ENCODE measurements at regions of chr11 and their contacts with region 1.

Region 1: GRCh38 chr11:127939000-127939399 is 648.4 kb downstream of the ETS1 start:
- DNase-seq: peak; percentile 75
- H3K4me3 ChIP-seq: no peak overlapping the region
- H3K27ac ChIP-seq: peak overlapping the region; percentile 76
- H3K4me1 ChIP-seq: peaks cover 27% of the 10 kb centered on the region
- H3K27me3 ChIP-seq: no peaks in the 10 kb centered on the region
- CTCF ChIP-seq: no peak

Region 2: DNA sequence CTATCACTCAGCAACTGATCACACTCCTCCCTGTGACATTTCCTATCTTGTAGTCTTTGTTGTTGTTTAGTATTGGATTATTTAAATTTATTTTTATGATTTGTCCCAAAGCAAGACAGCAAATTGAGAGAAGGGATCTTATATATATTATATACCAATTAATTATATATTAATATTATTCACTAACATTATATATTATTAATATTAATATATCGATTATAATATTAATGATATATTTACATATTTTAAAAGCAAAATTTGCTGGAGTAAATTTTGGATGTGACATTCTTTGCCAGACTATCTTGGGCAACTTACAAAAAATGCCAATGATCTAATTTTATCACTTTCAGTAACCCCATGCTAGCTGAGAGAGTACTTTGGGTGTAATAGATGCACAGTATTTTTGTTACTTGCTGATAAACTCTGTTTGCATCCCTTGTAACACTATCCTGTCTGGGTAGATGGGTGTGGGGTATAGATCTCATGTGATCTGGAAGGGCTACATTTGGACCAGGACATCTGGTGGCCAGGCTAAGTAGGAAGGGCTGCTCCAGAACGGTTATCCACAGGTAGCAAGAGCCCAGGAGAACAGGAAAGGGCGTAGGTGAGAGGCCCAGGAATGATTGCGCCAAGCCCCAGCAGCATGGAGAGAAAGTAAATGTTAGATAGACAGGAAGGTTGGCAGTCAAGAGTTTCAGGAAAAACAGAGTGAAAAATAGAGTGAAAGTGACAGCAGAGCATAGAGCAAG is 329.8 kb before region 1 on chr11:
- CTCF ChIA-PET with region 1: no interaction called
- dilution Hi-C with region 1: no loop called
- in situ Hi-C with region 1: no loop called
- intact Hi-C with region 1: no loop called
- DNase-seq: no peak
- H3K4me3 ChIP-seq: no peak overlapping the region
- H3K27ac ChIP-seq: no peak overlapping the region
- H3K4me1 ChIP-seq: no peaks in the 10 kb centered on the region
- H3K27me3 ChIP-seq: no peaks in the 10 kb centered on the region
- CTCF ChIP-seq: no peak

Region 3: GRCh38 chr11:127859941-127860354 is 79.1 kb before region 1 on chr11:
- CTCF ChIA-PET with region 1: no interaction called
- dilution Hi-C with region 1: no loop called
- in situ Hi-C with region 1: no loop called
- intact Hi-C with region 1: loop called (anchors 1 kb)
- DNase-seq: peak; percentile 46
- H3K4me3 ChIP-seq: no peak overlapping the region
- H3K27ac ChIP-seq: peak overlapping the region; percentile 47
- H3K4me1 ChIP-seq: peaks cover 24% of the 10 kb centered on the region
- H3K27me3 ChIP-seq: no peaks in the 10 kb centered on the region
- CTCF ChIP-seq: no peak

Region 4: DNA sequence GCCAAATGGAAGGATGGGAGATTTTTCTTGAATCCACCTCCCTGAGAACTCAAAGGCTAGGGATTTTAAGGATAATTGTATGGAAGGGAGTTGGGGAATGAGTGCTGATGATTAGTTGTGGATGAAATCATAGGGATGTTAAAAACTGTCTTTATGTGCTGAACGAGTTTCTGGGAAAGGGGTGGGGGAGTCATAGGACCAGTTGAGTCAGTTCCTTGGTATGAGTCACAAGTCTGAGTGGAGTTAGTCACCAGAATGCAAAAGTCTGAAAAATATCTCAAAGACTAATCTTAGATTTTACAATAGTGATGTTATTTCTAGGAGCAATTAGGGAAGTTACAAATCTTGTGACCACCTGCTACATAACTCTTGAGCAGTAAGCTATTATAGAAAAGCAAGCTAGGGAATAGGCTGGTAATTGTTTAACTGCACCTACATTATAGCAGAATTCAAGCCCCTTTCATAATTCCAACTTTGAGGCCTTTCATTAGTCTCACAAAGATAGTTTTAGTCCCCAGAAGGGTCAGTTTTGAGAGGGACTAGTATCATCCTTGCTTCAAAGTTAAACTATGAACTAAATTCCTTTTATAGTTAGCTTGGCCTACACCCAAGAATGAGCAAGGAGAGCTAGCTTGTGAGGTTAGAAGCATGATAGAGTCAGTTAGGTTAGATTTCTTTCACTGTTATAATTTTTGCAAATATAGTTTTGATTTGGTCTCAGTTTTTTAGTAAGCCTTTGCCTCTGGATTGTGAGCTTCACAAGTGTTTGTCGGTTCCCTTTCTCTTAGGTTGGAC is 19.6 kb before region 1 on chr11:
- CTCF ChIA-PET with region 1: no interaction called
- dilution Hi-C with region 1: no loop called
- in situ Hi-C with region 1: no loop called
- intact Hi-C with region 1: loop called (anchors 2 kb)
- DNase-seq: peak; percentile 95
- H3K4me3 ChIP-seq: no peak overlapping the region
- H3K27ac ChIP-seq: peak overlapping the region; percentile 89
- H3K4me1 ChIP-seq: peaks cover 14% of the 10 kb centered on the region
- H3K27me3 ChIP-seq: no peaks in the 10 kb centered on the region
- CTCF ChIP-seq: no peak

Region 5: DNA sequence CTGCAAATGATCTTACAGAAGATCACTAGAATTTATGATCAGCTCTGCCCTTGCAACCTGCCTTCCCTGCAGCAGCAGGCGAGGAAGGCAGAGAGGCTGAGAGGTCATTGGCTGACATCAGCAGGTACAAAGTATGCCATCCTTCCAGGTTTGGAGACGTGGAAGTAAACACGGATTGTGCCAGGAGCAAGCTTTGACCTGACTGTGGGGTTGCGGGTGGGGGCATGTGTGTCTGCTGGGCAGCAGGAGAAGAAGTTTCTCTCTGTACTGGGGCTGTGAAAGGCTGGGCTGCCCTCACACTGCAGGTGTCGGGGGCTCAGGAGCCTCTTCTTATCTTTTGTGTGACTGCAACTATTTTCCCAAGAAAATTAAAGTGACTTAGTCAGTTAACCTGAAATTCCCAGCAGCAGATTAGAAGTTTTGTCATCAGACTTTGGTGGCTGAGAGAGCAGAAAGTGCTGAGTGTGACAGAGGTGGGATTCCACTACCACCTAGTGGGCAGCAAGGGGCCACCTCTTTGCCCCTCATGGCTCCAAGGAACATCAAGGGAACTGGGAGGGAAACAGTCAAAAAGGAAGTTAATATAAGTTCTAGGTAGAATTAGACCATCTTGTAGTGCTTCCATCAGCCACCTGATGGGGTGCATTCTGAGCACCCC is 82.5 kb after region 1 on chr11:
- CTCF ChIA-PET with region 1: no interaction called
- dilution Hi-C with region 1: no loop called
- in situ Hi-C with region 1: loop called in 1 of 2 experiments (anchors 10 kb)
- intact Hi-C with region 1: loop called (anchors 1 kb)
- DNase-seq: no peak
- H3K4me3 ChIP-seq: no peak overlapping the region
- H3K27ac ChIP-seq: no peak overlapping the region
- H3K4me1 ChIP-seq: peaks cover 27% of the 10 kb centered on the region
- H3K27me3 ChIP-seq: no peaks in the 10 kb centered on the region
- CTCF ChIP-seq: peak; percentile 23 to 50

Region 6: GRCh38 chr11:128086794-128087193 is 147.8 kb after region 1 on chr11:
- CTCF ChIA-PET with region 1: no interaction called
- dilution Hi-C with region 1: no loop called
- in situ Hi-C with region 1: no loop called
- intact Hi-C with region 1: no loop called
- DNase-seq: no peak
- H3K4me3 ChIP-seq: no peak overlapping the region
- H3K27ac ChIP-seq: no peak overlapping the region
- H3K4me1 ChIP-seq: no peaks in the 10 kb centered on the region
- H3K27me3 ChIP-seq: no peaks in the 10 kb centered on the region
- CTCF ChIP-seq: no peak

Region 7: DNA sequence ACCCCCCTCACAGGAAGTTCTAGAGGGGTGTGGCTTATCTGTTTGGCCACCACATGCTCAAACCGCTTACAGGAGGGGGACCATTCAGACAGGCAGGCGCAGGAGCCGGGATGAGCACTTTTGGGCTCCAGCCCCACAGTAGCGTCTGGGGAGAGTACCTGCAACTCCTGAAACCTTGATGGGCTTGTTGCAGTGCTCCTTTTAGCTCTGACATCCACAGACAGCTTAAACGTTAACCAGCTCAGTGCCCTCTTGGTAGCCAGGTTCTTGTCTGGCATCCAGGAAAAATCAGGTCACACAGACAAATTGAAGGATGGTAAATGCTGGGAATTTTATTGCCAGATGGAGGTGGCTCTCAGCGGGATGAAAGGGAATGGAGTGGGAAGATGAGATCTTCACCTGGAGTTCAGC is 322.0 kb after region 1 on chr11:
- CTCF ChIA-PET with region 1: no interaction called
- dilution Hi-C with region 1: no loop called
- in situ Hi-C with region 1: no loop called
- intact Hi-C with region 1: no loop called
- DNase-seq: no peak
- H3K4me3 ChIP-seq: no peak overlapping the region
- H3K27ac ChIP-seq: no peak overlapping the region
- H3K4me1 ChIP-seq: no peaks in the 10 kb centered on the region
- H3K27me3 ChIP-seq: no peaks in the 10 kb centered on the region
- CTCF ChIP-seq: no peak